Thyroid gland (tissue), 4 donors: ENCODE measurements at regions of chr15 and their contacts with region 1.

Region 1: DNA sequence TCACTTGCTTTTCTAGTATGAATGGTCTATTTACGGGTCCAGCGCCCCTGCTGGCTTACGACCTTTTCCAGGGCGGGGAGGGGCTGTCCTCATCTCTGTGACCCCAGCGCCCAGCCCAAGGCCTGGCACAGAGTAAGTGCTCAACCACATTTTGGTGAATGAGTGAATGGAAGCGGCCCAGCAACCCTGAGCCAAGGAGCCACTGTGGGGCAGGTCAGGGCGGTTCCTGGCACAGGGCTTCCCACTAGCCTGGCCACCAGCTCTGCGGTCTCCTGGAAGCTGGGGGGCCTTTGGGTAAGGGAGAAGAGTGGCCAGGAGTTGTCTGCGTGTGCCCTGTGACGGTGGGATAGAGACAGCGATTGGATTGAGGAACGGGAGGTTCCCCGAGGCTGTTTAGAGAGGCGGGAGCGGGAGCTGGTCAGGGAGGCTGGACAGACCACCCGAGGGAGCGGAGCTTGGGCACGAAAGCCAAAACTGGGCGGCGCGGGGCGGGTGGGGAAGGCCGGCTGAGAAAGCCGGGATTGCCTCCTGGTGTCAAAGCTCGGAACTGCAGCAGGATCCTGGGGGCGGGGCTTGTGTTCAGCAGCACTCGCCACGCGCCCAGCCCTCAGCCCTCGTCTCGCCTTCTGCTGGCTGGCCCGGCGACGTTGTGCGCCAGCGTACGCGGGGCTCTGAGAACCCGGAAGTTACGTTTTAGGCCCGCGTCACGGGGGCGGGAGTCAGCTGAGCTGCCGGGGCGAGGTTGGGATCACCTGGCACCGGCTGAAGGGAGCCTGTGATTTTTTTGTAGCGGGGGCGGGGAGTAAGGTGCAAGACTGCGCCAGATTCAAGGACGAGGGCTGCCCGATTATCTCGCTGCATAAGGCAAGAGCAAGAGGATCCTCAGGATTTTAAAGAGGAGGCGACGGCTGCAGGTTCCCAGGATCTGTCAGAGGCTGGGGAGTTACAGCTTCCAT is at the start of gene VPS18:
- DNase-seq: peak; percentile 99
- H3K4me3 ChIP-seq: peak within 1 kb of the TSS; percentile 68 to 96 (median 74)
- H3K27ac ChIP-seq: peak within 1 kb of the TSS; percentile 78 to 89 (median 84)
- H3K4me1 ChIP-seq: peaks cover 11 to 15% of the 10 kb centered on the region in 2 donors
- H3K27me3 ChIP-seq: no peaks in the 10 kb centered on the region
- CTCF ChIP-seq: peak; percentile 92 to 99 (median 96)
- POLR2A ChIP-seq: peak in 1 of 2 donors; percentile 88
- total RNA-seq, gene VPS18: 29.2 to 43.6 (median 37.2) TPM

Region 2: GRCh38 chr15:40593588-40594428 is 300.2 kb before region 1 on chr15 and contains the start of gene KNL1:
- intact Hi-C with region 1: loop called (anchors 10 kb)
- DNase-seq: peak; percentile 89 to 91
- H3K4me3 ChIP-seq: peak within 1 kb of the TSS; percentile 27 to 44 (median 30)
- H3K27ac ChIP-seq: peak within 1 kb of the TSS; percentile 94 to 95 (median 94)
- H3K4me1 ChIP-seq: peaks cover 7 to 8% of the 10 kb centered on the region in 2 donors
- H3K27me3 ChIP-seq: no peaks in the 10 kb centered on the region
- CTCF ChIP-seq: no peak
- POLR2A ChIP-seq: no peak
- total RNA-seq, gene KNL1: 0.78 to 3.8 (median 0.93) TPM

Region 3: DNA sequence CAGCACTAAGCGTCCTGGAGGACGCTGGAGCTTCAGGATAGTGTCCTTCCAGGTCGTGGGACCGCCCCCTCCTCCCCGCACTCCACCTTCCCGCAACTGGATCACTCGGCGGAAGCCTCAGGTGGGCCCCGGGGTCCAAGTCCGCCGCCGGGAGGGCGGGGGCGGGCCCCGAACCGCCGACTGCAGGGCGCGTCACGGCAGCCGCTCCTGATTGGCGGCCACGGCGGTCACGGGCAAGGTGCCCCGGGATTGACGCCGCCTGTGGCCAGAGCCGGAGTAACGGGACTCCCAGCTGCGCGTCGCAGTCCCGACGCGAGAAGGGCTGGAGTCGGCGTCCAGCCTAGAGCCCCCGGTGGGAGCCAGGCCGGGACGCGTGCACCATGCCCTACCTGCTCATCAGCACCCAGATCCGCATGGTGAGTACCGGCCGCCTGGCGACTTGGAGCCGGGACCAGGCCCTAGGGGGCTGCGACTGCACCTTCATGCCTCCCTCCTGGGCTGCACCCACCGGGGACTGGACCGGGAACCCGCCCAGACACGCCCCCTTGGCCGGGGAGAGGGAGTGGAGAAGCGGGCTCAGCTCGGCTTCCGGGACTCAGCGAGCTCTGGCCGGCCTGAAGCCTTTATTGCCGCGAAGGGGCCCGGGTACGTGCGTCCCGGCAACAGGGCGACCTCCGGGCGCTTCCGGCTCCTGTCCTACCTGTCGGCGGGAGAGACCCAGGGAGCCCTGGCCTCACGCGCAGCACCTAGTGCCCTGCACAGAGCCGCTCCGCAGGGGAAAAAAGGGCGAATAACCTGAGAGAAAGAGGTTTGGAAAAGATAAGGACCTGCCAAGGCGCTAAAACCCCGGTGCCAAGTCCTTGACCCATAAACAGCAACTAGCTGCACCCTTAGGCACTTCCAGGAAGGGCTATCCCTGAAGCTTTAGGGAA is 129.9 kb before region 1 on chr15 and contains the start of gene GCHFR:
- intact Hi-C with region 1: loop called (anchors 10 kb)
- DNase-seq: peak; percentile 86 to 88
- H3K4me3 ChIP-seq: peak within 1 kb of the TSS; percentile 2 to 48 (median 6)
- H3K27ac ChIP-seq: peak within 1 kb of the TSS; percentile 70 to 87 (median 76)
- H3K4me1 ChIP-seq: peaks cover 18 to 36% of the 10 kb centered on the region in 2 donors
- H3K27me3 ChIP-seq: no peaks in the 10 kb centered on the region
- CTCF ChIP-seq: peak in 3 of 6 experiments; percentile 27 to 48 (median 48)
- POLR2A ChIP-seq: peak in 1 of 2 donors; percentile 67
- total RNA-seq, gene GCHFR: 17.1 to 73.4 (median 34.7) TPM

Region 4: DNA sequence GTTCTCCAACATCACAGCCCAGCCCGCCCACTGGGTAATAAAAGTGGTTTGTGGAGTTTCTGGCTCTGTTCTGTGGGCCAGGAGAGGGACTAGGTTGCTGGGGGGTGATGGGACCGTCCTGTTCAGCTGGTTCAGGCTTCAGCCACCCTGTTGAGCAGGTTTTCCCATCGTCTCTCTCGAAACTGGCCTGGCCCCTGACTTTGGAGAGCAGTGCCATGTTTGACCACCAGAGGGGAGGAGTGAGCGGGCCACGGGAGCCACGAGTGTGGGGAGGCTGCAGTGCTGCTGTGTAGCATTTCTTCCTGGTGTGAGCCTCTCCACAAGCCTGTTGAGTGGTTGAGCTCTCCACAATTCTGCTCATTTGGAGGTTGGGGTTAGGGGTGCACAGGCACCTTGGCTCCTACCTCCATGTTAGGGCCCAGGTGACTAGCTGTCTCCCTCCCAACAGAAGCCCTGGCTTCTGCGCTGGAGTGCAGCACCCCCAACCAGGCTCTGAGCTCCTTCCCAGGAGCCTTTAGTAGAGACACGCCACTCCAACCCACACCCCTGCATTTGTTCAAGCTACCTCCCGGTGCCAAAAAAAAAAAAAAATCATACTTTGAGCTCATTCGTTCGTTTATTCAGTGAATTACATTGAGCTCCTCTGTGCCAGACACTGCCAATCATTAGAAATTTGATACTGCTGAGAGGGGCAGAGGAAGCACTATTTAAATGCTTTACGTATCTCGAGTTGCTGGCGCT is 36.2 kb before region 1 on chr15:
- intact Hi-C with region 1: loop called (anchors 2 kb)
- DNase-seq: peak; percentile 83 to 88
- H3K4me3 ChIP-seq: no peak overlapping the region
- H3K27ac ChIP-seq: peak overlapping the region in 2 of 3 donors; percentile 58 to 65
- H3K4me1 ChIP-seq: peaks cover 5 to 9% of the 10 kb centered on the region in 2 donors
- H3K27me3 ChIP-seq: no peaks in the 10 kb centered on the region
- CTCF ChIP-seq: peak; percentile 82 to 97 (median 93)
- POLR2A ChIP-seq: no peak